ENCODE measurements at regions of chr3 and their contacts with region 1.

Region 1: DNA sequence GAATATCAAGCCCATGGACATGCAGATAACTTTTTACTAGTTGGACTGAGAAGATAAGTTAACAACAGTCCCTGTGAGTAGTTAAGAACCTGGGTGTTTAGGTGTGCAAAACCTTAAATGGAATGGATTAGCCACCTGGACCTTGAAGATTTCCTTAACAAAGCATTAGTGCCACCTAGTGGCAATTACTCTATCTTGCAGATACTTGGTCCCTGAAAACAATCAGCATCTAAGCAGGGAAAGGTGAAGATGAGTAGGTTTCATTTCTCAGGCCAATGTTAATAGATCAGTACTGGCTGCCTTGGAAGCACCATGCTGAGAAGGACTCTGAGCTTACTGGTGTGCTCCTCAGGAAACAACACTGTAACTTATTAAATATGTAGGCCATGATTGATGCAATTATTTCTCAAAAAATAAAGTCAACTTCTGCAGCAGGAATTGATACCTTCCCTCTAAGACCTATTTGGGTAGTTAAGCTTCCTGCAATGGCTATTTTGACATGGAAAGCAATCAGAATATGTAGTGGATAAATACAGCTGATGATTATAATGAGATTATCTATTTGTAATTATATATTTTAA is 329.4 kb downstream of the TBC1D5 start:
- DNase-seq: no peak
- H3K4me3 ChIP-seq: no peak overlapping the region
- H3K27ac ChIP-seq: no peak overlapping the region
- H3K4me1 ChIP-seq: no peaks in the 10 kb centered on the region
- H3K27me3 ChIP-seq: no peaks in the 10 kb centered on the region
- CTCF ChIP-seq: peak; percentile 48 to 82 (median 60)
- EP300 ChIP-seq: no peak
- POLR2A ChIP-seq: no peak

Region 2: GRCh38 chr3:17258823-17259436 is 154.1 kb before region 1 on chr3:
- intact Hi-C with region 1: loop called (anchors 5 kb)
- DNase-seq: no peak
- H3K4me3 ChIP-seq: no peak overlapping the region
- H3K27ac ChIP-seq: no peak overlapping the region
- H3K4me1 ChIP-seq: no peaks in the 10 kb centered on the region
- H3K27me3 ChIP-seq: no peaks in the 10 kb centered on the region
- CTCF ChIP-seq: peak; percentile 66 to 76 (median 67)
- EP300 ChIP-seq: no peak
- POLR2A ChIP-seq: no peak

Region 3: GRCh38 chr3:17360991-17361390 is 52.0 kb before region 1 on chr3:
- intact Hi-C with region 1: no loop called
- DNase-seq: no peak
- H3K4me3 ChIP-seq: no peak overlapping the region
- H3K27ac ChIP-seq: no peak overlapping the region
- H3K4me1 ChIP-seq: no peaks in the 10 kb centered on the region
- H3K27me3 ChIP-seq: no peaks in the 10 kb centered on the region
- CTCF ChIP-seq: no peak
- EP300 ChIP-seq: no peak
- POLR2A ChIP-seq: no peak

Region 4: GRCh38 chr3:17865631-17866030 is 452.6 kb after region 1 on chr3:
- intact Hi-C with region 1: no loop called
- DNase-seq: no peak
- H3K4me3 ChIP-seq: no peak overlapping the region
- H3K27ac ChIP-seq: no peak overlapping the region
- H3K4me1 ChIP-seq: no peaks in the 10 kb centered on the region
- H3K27me3 ChIP-seq: no peaks in the 10 kb centered on the region
- CTCF ChIP-seq: no peak
- EP300 ChIP-seq: no peak
- POLR2A ChIP-seq: no peak